Aorta (tissue), 5 donors: ENCODE measurements at regions of chr1 and their contacts with region 1.

Region 1: GRCh38 chr1:180482425-180483275 is 19.7 kb downstream of the ACBD6 start:
- DNase-seq: no peak
- ATAC-seq: no peak
- H3K4me3 ChIP-seq: no peak overlapping the region
- H3K27ac ChIP-seq: no peak overlapping the region
- H3K4me1 ChIP-seq: no peaks in the 10 kb centered on the region
- H3K27me3 ChIP-seq: no peaks in the 10 kb centered on the region

Region 2: GRCh38 chr1:180188091-180188506 is 294.6 kb before region 1 on chr1:
- intact Hi-C with region 1: loop called (anchors 5 to 10 kb)
- DNase-seq: peak in 1 of 2 donors; percentile 64
- ATAC-seq: no peak
- H3K4me3 ChIP-seq: no peak overlapping the region
- H3K27ac ChIP-seq: no peak overlapping the region
- H3K4me1 ChIP-seq: no peaks in the 10 kb centered on the region
- H3K27me3 ChIP-seq: no peaks in the 10 kb centered on the region

Region 3: GRCh38 chr1:180252638-180253536 is 229.8 kb before region 1 on chr1:
- intact Hi-C with region 1: loop called (anchors 2 to 5 kb)
- DNase-seq: peak; percentile 87 to 88
- ATAC-seq: no peak
- H3K4me3 ChIP-seq: no peak overlapping the region
- H3K27ac ChIP-seq: no peak overlapping the region
- H3K4me1 ChIP-seq: no peaks in the 10 kb centered on the region
- H3K27me3 ChIP-seq: no peaks in the 10 kb centered on the region

Region 4: GRCh38 chr1:180343931-180344769 is 138.5 kb before region 1 on chr1:
- intact Hi-C with region 1: no loop called
- DNase-seq: no peak
- ATAC-seq: no peak
- H3K4me3 ChIP-seq: no peak overlapping the region
- H3K27ac ChIP-seq: no peak overlapping the region
- H3K4me1 ChIP-seq: peaks cover 0 to 1% of the 10 kb centered on the region in 2 donors
- H3K27me3 ChIP-seq: no peaks in the 10 kb centered on the region

Region 5: DNA sequence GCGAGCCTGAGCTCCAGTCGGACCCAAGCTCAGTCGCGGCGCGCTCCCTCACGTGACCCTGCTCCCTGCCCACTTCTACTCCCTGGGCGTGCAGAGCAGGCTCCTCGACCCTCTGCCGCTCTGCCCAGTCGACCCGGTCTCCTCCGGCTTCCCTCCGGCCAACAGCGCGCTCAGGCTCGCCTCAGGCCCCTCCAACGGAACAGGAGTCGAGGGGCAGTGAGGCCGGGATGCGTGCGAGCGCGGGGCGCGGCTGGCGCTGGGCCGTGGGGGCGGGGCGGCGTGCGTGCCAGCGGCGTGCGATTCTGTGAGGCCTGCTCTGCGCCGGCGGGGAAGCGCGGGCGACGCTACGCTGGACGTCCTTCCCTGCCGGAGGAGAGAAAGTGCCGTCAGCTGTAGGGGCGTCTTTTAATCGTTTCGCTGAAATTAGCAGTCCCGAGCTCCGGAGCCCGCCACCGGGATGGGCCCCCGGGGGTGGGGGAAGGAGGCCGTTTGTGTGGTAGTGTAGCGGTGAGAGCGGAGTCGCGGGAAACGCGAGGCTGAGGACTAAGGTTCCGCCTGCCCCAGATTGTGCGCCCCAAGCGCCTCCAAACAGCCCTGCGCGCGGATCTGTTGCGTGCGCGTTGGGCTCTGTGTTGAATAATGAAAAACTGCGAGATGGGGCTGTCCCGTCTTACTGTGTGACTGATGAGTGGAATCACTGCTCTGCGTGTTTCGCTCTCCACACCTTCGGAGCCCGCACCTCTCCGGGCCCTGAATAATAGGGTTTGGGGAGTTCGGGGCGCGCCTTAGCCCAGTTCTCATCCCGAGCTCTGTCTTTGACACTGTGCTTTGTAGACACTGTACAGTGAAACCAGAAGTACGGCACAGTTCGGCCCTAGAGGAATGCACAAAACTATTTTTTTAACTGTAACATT is 20.0 kb after region 1 on chr1 and contains the start of gene ACBD6:
- intact Hi-C with region 1: no loop called
- DNase-seq: peak; percentile 90 to 93
- ATAC-seq: peak; percentile 98
- H3K4me3 ChIP-seq: peak within 1 kb of the TSS; percentile 52 to 56
- H3K27ac ChIP-seq: peak within 1 kb of the TSS in 1 of 2 donors; percentile 59
- H3K4me1 ChIP-seq: no peaks in the 10 kb centered on the region
- H3K27me3 ChIP-seq: no peaks in the 10 kb centered on the region
- total RNA-seq, gene ACBD6: 27.7 to 32.1 TPM